GM12878 (cell line): ENCODE measurements at regions of chr4 and their contacts with region 1.

Region 1: GRCh38 chr4:87150498-87151261 is 69.7 kb downstream of the KLHL8 start:
- DNase-seq: peak; percentile 35
- ATAC-seq: peak; percentile 84
- H3K4me3 ChIP-seq: no peak overlapping the region
- H3K27ac ChIP-seq: no peak overlapping the region
- H3K4me1 ChIP-seq: no peaks in the 10 kb centered on the region
- H3K27me3 ChIP-seq: no peaks in the 10 kb centered on the region
- CTCF ChIP-seq: peak; percentile 82 to 92 (median 84)
- EP300 ChIP-seq: no peak
- POLR2A ChIP-seq: no peak
- RAD21 ChIP-seq: peak; percentile 90

Region 2: GRCh38 chr4:86991994-86992393 is 158.7 kb before region 1 on chr4:
- CTCF ChIA-PET with region 1: no interaction called
- POLR2A ChIA-PET with region 1: no interaction called
- RAD21 ChIA-PET with region 1: no interaction called
- SMC1A ChIA-PET with region 1: no interaction called
- in situ Hi-C with region 1: no loop called
- intact Hi-C with region 1: no loop called
- DNase-seq: no peak
- ATAC-seq: no peak
- H3K4me3 ChIP-seq: no peak overlapping the region
- H3K27ac ChIP-seq: no peak overlapping the region
- H3K4me1 ChIP-seq: peaks cover 2% of the 10 kb centered on the region
- H3K27me3 ChIP-seq: no peaks in the 10 kb centered on the region
- CTCF ChIP-seq: no peak
- EP300 ChIP-seq: no peak
- POLR2A ChIP-seq: no peak
- RAD21 ChIP-seq: no peak

Region 3: DNA sequence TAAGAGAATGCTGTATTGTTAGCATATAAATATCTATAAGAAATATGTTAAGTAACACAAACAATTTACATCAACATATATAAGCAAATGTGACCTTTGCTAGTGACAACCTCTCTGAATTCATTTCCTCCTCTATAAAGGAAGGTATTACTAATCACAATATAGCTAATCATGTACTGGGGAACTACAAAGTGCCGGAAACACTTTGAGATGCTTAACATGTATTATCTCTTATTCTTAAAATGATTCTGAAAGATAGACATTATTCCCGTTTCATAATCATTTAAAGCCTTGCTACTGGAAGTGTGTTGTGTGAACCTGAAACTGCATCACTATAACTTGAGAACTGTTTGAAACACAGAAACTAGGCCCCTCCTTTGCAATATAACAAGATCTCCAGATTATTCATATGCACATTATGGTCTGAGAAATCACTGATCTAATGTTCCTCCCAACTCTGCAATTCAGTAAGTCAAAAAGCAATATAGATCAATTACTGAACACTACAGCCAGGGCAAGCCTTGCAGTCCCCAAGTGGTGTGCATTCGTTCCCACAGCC is 15.7 kb after region 1 on chr4:
- CTCF ChIA-PET with region 1: interaction called, 21 read pairs
- POLR2A ChIA-PET with region 1: interaction called, 7 read pairs
- RAD21 ChIA-PET with region 1: interaction called, 6 read pairs
- SMC1A ChIA-PET with region 1: interaction called, 7 read pairs
- in situ Hi-C with region 1: no loop called
- intact Hi-C with region 1: no loop called
- DNase-seq: no peak
- ATAC-seq: no peak
- H3K4me3 ChIP-seq: no peak overlapping the region
- H3K27ac ChIP-seq: no peak overlapping the region
- H3K4me1 ChIP-seq: no peaks in the 10 kb centered on the region
- H3K27me3 ChIP-seq: no peaks in the 10 kb centered on the region
- CTCF ChIP-seq: no peak
- EP300 ChIP-seq: no peak
- POLR2A ChIP-seq: no peak
- RAD21 ChIP-seq: no peak

Region 4: GRCh38 chr4:87188048-87188447 is 37.4 kb after region 1 on chr4:
- CTCF ChIA-PET with region 1: interaction called, 13 read pairs
- POLR2A ChIA-PET with region 1: no interaction called
- RAD21 ChIA-PET with region 1: no interaction called
- SMC1A ChIA-PET with region 1: interaction called, 4 read pairs
- in situ Hi-C with region 1: no loop called
- intact Hi-C with region 1: no loop called
- DNase-seq: no peak
- ATAC-seq: no peak
- H3K4me3 ChIP-seq: no peak overlapping the region
- H3K27ac ChIP-seq: no peak overlapping the region
- H3K4me1 ChIP-seq: no peaks in the 10 kb centered on the region
- H3K27me3 ChIP-seq: no peaks in the 10 kb centered on the region
- CTCF ChIP-seq: no peak
- EP300 ChIP-seq: no peak
- POLR2A ChIP-seq: no peak
- RAD21 ChIP-seq: no peak

Region 5: DNA sequence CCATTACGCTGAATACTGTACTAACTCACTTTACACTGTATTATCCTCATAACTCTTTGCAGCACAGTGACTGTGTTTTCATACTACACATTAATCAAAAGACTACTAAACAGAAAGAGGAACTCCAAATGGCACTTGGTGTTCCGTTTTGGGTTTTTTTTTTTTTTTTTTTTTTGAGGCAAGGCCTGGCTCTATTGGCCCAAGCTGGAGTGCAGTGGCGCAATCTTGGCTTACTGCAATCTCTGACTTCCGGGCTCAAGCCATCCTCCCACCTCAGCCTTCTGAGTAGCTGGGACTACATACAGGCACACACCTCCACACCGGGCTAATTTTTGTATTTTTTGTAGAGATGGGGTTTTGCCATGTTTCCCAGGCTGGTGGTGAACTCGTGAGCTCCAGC is 59.0 kb after region 1 on chr4:
- CTCF ChIA-PET with region 1: interaction called, 4 read pairs
- POLR2A ChIA-PET with region 1: no interaction called
- RAD21 ChIA-PET with region 1: interaction called, 5 read pairs
- SMC1A ChIA-PET with region 1: interaction called, 11 read pairs
- in situ Hi-C with region 1: no loop called
- intact Hi-C with region 1: no loop called
- DNase-seq: peak; percentile 26
- ATAC-seq: peak; percentile 96
- H3K4me3 ChIP-seq: no peak overlapping the region
- H3K27ac ChIP-seq: peak overlapping the region; percentile 54
- H3K4me1 ChIP-seq: no peaks in the 10 kb centered on the region; the same call in 1 of the 2 replicates
- H3K27me3 ChIP-seq: no peaks in the 10 kb centered on the region
- CTCF ChIP-seq: no peak
- EP300 ChIP-seq: no peak
- POLR2A ChIP-seq: no peak
- RAD21 ChIP-seq: no peak

Region 6: DNA sequence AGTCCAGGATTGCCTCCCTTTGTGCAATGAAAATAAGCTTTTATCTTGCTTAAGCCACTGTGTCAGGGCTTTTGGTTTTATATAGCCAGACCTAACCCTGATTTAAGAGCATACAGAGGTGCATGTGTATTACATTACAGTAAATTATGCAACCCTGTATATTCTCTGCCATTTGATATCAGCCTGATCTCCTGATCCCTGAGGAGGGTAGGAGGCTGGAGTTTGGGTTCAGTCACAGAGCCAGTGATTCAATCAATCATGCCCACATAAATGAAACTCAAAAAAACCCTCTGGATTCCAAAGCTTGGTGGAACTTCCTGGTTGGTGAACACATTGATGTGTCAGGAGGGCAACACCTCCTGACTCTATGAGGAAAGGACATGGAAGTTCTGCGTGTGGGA is 77.1 kb after region 1 on chr4:
- CTCF ChIA-PET with region 1: interaction called, 130 read pairs
- POLR2A ChIA-PET with region 1: no interaction called
- RAD21 ChIA-PET with region 1: interaction called, 5 read pairs
- SMC1A ChIA-PET with region 1: interaction called, 17 read pairs
- in situ Hi-C with region 1: no loop called
- intact Hi-C with region 1: no loop called
- DNase-seq: no peak
- ATAC-seq: no peak
- H3K4me3 ChIP-seq: no peak overlapping the region
- H3K27ac ChIP-seq: no peak overlapping the region
- H3K4me1 ChIP-seq: no peaks in the 10 kb centered on the region
- H3K27me3 ChIP-seq: no peaks in the 10 kb centered on the region
- CTCF ChIP-seq: no peak
- EP300 ChIP-seq: no peak
- POLR2A ChIP-seq: no peak
- RAD21 ChIP-seq: no peak

Region 7: DNA sequence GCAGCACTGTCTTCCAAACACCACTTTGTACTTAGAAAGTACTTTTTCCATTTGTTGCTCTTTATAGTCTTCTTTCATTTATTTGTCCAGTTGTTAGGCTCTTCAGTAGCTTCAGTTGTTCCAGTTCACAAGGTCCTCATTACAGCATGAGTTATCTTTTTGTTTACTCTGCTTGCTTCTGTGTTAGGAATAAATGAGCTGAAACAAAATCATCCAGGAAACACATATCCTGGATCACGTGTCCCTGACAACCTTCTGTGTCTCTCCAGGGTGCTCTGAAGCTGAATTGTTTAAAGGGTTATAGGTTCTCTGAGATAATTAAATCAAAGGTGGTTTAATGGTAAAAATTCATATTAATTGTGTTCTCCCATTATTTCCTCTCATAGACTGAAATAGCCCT is 89.7 kb after region 1 on chr4:
- CTCF ChIA-PET with region 1: interaction called, 130 read pairs
- POLR2A ChIA-PET with region 1: interaction called, 4 read pairs
- RAD21 ChIA-PET with region 1: interaction called, 61 read pairs
- SMC1A ChIA-PET with region 1: interaction called, 79 read pairs
- in situ Hi-C with region 1: no loop called
- intact Hi-C with region 1: loop called (anchors 1 kb)
- DNase-seq: no peak
- ATAC-seq: no peak
- H3K4me3 ChIP-seq: no peak overlapping the region
- H3K27ac ChIP-seq: no peak overlapping the region
- H3K4me1 ChIP-seq: no peaks in the 10 kb centered on the region; the same call in 1 of the 2 replicates
- H3K27me3 ChIP-seq: 0 out of 4 replicates have a peak, but pooled peaks cover 0 to 2% of the 10 kb centered on the region in 2 experiments
- CTCF ChIP-seq: no peak
- EP300 ChIP-seq: no peak
- POLR2A ChIP-seq: no peak
- RAD21 ChIP-seq: no peak

Region 8: DNA sequence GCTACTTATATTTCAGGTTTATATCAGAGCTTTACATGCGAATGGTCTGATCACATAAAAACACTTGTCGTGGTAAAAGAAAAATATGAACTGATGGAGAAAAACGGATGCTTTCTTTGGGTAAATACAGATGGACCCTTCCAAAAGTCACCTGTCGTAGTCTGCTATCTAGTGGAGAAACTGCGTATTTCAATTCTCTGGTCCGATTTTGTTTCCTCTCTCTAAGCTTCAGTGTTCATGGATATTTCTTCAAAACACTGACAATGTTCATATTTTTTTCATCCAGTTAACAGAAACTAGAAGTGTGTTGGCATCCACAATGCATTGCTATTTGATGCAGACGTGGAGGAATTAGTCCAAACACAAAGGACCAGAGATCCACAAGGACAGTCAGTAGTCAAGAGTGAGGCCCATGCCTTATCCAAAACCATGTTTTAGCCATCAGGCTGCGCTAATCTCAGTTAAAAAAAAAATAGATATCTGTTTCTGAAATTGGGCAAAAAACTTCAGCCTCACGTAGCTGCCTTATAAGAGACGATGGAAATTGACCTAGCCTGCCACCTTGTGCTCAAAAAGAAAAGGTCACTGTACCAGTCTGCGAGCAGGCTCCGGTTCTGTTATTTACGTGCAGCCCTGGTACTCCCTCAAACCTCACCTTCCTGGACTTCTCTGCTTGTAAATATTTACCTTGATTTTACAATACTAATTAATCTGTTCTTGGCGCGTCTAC is 698.1 kb after region 1 on chr4:
- CTCF ChIA-PET with region 1: no interaction called
- POLR2A ChIA-PET with region 1: no interaction called
- RAD21 ChIA-PET with region 1: no interaction called
- SMC1A ChIA-PET with region 1: no interaction called
- in situ Hi-C with region 1: loop called (anchors 25 kb)
- intact Hi-C with region 1: no loop called
- DNase-seq: no peak
- ATAC-seq: peak; percentile 98
- H3K4me3 ChIP-seq: no peak overlapping the region
- H3K27ac ChIP-seq: no peak overlapping the region
- H3K4me1 ChIP-seq: no peaks in the 10 kb centered on the region
- H3K27me3 ChIP-seq: no peaks in the 10 kb centered on the region; a peak in 1 of 4 replicates
- CTCF ChIP-seq: peak; percentile 49 to 64 (median 59); a peak in 5 of 6 replicates
- EP300 ChIP-seq: no peak
- POLR2A ChIP-seq: no peak
- RAD21 ChIP-seq: peak; percentile 57